ENCODE measurements at regions of chr17 and their contacts with region 1.

Region 1: GRCh38 chr17:40531051-40531991 is 29.9 kb upstream of the TNS4 start:
- DNase-seq: no peak
- H3K4me3 Mint-ChIP-seq: no peak overlapping the region
- H3K27ac Mint-ChIP-seq: no peak overlapping the region
- H3K4me1 Mint-ChIP-seq: peaks cover 19% of the 10 kb centered on the region
- H3K27me3 Mint-ChIP-seq: peaks cover 48% of the 10 kb centered on the region
- CTCF ChIP-seq: no peak

Region 2: DNA sequence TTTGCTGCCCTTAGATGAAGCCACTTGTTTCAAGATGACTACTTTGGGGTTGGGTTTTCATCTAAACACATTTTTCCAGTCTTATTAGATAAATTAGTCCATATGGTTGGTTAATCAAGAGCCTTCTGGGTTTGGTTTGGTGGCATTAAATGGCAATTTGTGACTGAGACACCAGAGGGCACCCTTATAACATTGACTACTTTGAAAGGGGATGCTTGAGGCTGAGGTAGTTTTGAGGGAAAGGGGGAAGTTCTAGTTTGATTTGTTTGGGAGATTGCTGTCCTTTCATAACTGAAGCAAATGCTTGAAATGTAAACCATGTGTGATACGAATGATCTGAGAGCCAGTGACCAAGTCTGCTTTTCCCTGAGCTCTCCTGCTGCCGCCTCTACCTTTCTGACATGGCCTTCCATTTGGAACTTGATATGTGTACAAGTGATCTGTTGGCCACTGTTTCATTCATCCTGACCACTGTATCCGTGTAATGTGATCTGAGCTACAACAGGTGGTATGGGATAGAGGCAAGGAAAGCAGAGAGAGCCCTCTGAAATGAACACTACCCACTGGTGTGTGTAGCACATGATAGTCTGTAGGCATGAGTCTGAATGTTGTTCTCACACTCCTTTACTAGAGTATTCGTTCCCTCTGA is 228.2 kb before region 1 on chr17:
- CTCF ChIA-PET with region 1: interaction called, 12 read pairs
- intact Hi-C with region 1: loop called (anchors 5 kb)
- DNase-seq: peak; percentile 94
- H3K4me3 Mint-ChIP-seq: no peak overlapping the region
- H3K27ac Mint-ChIP-seq: peak overlapping the region; percentile 26
- H3K4me1 Mint-ChIP-seq: peaks cover 34% of the 10 kb centered on the region
- H3K27me3 Mint-ChIP-seq: no peaks in the 10 kb centered on the region
- CTCF ChIP-seq: peak; percentile 99

Region 3: GRCh38 chr17:40371261-40371929 is 159.9 kb before region 1 on chr17:
- CTCF ChIA-PET with region 1: interaction called, 222 read pairs
- intact Hi-C with region 1: no loop called
- DNase-seq: no peak
- H3K4me3 Mint-ChIP-seq: no peak overlapping the region
- H3K27ac Mint-ChIP-seq: no peak overlapping the region
- H3K4me1 Mint-ChIP-seq: peaks cover 25% of the 10 kb centered on the region
- H3K27me3 Mint-ChIP-seq: no peaks in the 10 kb centered on the region
- CTCF ChIP-seq: no peak

Region 4: GRCh38 chr17:40443583-40444327 is 87.6 kb before region 1 on chr17:
- CTCF ChIA-PET with region 1: interaction called, 4,142 read pairs
- intact Hi-C with region 1: loop called (anchors 1 kb)
- DNase-seq: peak; percentile 100
- H3K4me3 Mint-ChIP-seq: peak overlapping the region; percentile 1
- H3K27ac Mint-ChIP-seq: no peak overlapping the region
- H3K4me1 Mint-ChIP-seq: peaks cover 35% of the 10 kb centered on the region
- H3K27me3 Mint-ChIP-seq: peaks cover 37% of the 10 kb centered on the region
- CTCF ChIP-seq: no peak

Region 5: GRCh38 chr17:40516581-40517285 is 14.6 kb before region 1 on chr17:
- CTCF ChIA-PET with region 1: interaction called, 402 read pairs
- intact Hi-C with region 1: no loop called
- DNase-seq: peak; percentile 94
- H3K4me3 Mint-ChIP-seq: no peak overlapping the region
- H3K27ac Mint-ChIP-seq: peak overlapping the region; percentile 1
- H3K4me1 Mint-ChIP-seq: peaks cover 65% of the 10 kb centered on the region
- H3K27me3 Mint-ChIP-seq: peaks cover 26% of the 10 kb centered on the region
- CTCF ChIP-seq: no peak

Measured in Calu3 (cell line).